MCF 10A (cell line): ENCODE measurements at regions of chr7 and their contacts with region 1.

Region 1: GRCh38 chr7:131107337-131108211 is 220.1 kb upstream of the MKLN1 start:
- DNase-seq: peak; percentile 76
- H3K4me3 Mint-ChIP-seq: peak overlapping the region; percentile 75
- H3K27ac Mint-ChIP-seq: peak overlapping the region; percentile 70
- H3K4me1 Mint-ChIP-seq: peaks cover 46% of the 10 kb centered on the region
- H3K27me3 Mint-ChIP-seq: no peaks in the 10 kb centered on the region
- CTCF ChIP-seq: no peak

Region 2: DNA sequence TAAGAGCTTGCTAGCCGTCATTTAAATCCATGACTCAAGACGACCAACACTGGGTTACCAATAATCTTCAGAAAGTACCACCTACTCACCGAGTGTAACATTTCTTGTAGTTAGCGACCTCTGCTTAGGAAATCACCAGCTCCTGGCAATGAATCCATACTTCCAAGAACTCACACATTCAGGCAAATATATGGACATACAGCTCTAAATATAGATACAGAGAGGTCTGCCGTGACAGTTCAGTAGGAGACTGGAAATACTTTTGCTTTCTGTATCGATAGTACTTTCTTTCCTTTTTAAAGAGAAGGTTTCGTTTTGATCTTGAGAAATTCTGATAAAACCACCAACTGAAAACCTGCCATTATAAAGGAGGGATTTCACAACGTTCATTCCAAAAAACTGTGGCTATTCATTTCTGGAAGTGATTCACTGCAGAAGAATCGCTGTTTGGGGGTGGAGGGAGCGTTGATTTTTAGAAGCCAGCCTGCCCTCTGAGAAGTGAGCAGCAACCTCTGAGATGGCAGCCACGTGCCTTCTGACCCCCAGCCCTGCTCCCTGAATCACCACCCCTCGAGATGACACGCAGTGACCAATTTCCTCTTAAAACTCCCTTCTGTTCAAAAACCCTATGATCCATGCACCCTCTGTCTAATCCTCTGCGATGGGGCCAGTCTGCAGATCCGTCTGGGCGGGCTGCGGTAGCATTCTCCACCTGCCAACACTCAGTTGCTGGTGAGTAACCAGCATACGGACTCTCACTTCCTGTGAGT is 194.5 kb before region 1 on chr7:
- CTCF ChIA-PET with region 1: no interaction called
- POLR2A ChIA-PET with region 1: interaction called, 20 read pairs
- intact Hi-C with region 1: no loop called
- DNase-seq: peak; percentile 95
- H3K4me3 Mint-ChIP-seq: peak overlapping the region; percentile 86
- H3K27ac Mint-ChIP-seq: peak overlapping the region; percentile 89
- H3K4me1 Mint-ChIP-seq: peaks cover 68% of the 10 kb centered on the region
- H3K27me3 Mint-ChIP-seq: no peaks in the 10 kb centered on the region
- CTCF ChIP-seq: no peak

Region 3: DNA sequence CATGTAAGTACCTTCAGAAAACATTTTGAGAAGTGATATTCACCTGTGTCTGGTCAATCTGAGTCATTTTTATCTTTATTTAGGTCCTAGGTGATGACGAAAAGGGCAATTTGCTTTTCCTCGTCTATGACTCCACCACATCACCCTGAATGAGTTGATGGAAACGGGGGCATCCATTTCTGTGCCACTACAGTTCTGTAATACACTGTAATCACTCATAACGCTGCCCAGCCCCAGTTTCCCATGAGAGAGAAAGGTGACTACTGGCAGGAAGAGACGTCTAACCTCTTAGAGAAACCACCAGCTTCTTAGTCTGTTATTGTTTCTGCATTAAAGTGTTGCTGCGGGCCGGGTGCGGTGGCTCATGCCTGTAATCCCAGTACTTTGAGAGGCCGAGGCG is 14.8 kb after region 1 on chr7:
- CTCF ChIA-PET with region 1: no interaction called
- POLR2A ChIA-PET with region 1: interaction called, 11 read pairs
- intact Hi-C with region 1: no loop called
- DNase-seq: no peak
- H3K4me3 Mint-ChIP-seq: no peak overlapping the region
- H3K27ac Mint-ChIP-seq: no peak overlapping the region
- H3K4me1 Mint-ChIP-seq: no peaks in the 10 kb centered on the region
- H3K27me3 Mint-ChIP-seq: no peaks in the 10 kb centered on the region
- CTCF ChIP-seq: no peak

Region 4: DNA sequence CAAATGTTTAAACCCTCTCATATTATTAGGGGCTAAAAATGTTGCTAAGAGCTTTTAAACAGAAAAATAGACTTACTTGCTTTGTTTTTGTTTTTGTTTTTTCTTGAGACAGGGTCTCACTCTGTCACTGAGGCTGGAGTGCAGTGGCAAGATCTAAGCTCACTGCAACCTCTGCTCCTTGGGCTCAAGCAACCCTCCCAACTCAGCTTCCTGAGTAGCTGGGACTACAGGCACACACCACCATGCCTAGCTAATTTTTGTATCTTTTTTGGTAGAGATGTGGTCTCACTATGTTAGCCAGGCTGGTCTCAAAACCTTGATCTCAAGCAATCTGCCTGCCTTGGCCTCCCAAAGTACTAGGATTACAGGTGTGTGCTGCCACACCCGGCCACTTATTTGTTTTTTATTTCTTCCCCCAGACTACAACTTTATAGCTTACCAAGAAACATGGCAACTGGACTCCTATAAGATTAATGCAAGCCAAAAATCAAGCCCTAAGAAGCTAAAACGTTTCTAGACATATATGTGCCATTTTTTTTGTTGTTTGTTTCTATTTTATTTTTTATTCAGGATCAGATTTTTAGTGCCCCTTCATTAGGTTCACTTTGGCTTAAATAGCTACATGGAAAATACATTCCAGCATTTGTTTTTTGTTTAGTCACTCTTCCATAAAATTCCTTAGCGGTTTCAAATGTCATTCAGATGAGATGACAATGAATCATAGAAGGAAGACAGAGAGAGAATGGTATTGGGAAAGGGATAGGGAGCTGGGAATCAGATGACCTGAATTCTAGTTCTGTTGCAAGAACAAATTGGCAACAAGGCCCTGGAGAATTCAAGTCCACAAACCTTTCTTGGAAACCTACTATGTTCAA is 56.7 kb after region 1 on chr7:
- CTCF ChIA-PET with region 1: interaction called, 5 read pairs
- POLR2A ChIA-PET with region 1: interaction called, 139 read pairs
- intact Hi-C with region 1: loop called (anchors 2 kb)
- DNase-seq: peak; percentile 92
- H3K4me3 Mint-ChIP-seq: peak overlapping the region; percentile 65
- H3K27ac Mint-ChIP-seq: peak overlapping the region; percentile 97
- H3K4me1 Mint-ChIP-seq: peaks cover 28% of the 10 kb centered on the region
- H3K27me3 Mint-ChIP-seq: no peaks in the 10 kb centered on the region
- CTCF ChIP-seq: no peak

Region 5: DNA sequence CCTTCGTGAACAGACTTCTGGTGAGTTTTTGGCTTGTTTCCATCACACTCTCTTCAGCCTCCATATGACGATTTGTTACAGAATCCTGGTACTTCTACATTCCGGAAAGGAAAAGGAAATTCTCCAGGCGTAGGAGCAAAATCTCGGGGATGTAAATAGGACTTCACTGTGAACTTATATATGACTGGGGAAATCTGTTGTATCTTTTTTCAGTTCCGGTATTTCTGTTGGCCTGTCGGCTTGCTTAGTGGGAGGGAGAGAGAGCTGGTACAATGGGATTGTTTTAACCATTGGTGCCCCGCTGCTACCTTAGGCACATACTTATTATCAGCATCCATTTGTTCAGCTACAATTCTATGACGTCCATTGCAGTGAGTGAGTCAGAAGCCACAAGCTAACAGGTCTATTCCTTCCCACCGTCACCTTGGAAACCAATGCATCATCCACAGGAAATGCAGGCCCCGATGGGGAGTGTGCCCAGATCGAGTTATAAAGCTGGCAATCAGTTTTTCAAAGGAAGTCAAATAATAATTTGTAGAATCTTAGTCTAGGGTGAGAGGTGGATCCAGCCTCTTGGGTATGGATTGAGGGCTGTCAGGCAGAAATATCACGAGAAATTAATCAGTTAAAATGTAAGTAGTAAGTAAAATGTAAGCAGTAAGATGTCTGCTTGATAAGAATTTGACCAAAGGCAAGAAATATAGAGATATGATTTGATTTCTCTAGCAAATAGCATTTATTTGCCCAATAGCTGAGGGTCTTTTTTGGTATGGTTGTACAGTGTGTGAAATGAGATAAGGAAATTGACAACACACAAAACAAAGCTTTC is 128.1 kb after region 1 on chr7:
- CTCF ChIA-PET with region 1: no interaction called
- POLR2A ChIA-PET with region 1: interaction called, 8 read pairs
- intact Hi-C with region 1: loop called (anchors 2 kb)
- DNase-seq: peak; percentile 97
- H3K4me3 Mint-ChIP-seq: peak overlapping the region; percentile 52
- H3K27ac Mint-ChIP-seq: peak overlapping the region; percentile 100
- H3K4me1 Mint-ChIP-seq: peaks cover 36% of the 10 kb centered on the region
- H3K27me3 Mint-ChIP-seq: no peaks in the 10 kb centered on the region
- CTCF ChIP-seq: no peak

Region 6: GRCh38 chr7:131293018-131293417 is 185.4 kb after region 1 on chr7:
- CTCF ChIA-PET with region 1: no interaction called
- POLR2A ChIA-PET with region 1: interaction called, 63 read pairs
- intact Hi-C with region 1: no loop called
- DNase-seq: peak; percentile 10
- H3K4me3 Mint-ChIP-seq: no peak overlapping the region
- H3K27ac Mint-ChIP-seq: no peak overlapping the region
- H3K4me1 Mint-ChIP-seq: peaks cover 16% of the 10 kb centered on the region
- H3K27me3 Mint-ChIP-seq: no peaks in the 10 kb centered on the region
- CTCF ChIP-seq: no peak

Region 7: GRCh38 chr7:131327626-131328376 is 220.2 kb after region 1 on chr7 and contains the start of gene MKLN1:
- CTCF ChIA-PET with region 1: no interaction called
- POLR2A ChIA-PET with region 1: interaction called, 86 read pairs
- intact Hi-C with region 1: loop called (anchors 1 kb)
- DNase-seq: peak; percentile 89
- H3K4me3 Mint-ChIP-seq: peak within 1 kb of the TSS; percentile 85
- H3K27ac Mint-ChIP-seq: peak within 1 kb of the TSS; percentile 99
- H3K4me1 Mint-ChIP-seq: peaks cover 16% of the 10 kb centered on the region
- H3K27me3 Mint-ChIP-seq: no peaks in the 10 kb centered on the region
- CTCF ChIP-seq: no peak
- total RNA-seq, gene MKLN1: 35.6 and 35.8 TPM in 2 replicates